Heart right ventricle (tissue), 16 donors: ENCODE measurements at regions of chr12 and their contacts with region 1.

Region 1: DNA sequence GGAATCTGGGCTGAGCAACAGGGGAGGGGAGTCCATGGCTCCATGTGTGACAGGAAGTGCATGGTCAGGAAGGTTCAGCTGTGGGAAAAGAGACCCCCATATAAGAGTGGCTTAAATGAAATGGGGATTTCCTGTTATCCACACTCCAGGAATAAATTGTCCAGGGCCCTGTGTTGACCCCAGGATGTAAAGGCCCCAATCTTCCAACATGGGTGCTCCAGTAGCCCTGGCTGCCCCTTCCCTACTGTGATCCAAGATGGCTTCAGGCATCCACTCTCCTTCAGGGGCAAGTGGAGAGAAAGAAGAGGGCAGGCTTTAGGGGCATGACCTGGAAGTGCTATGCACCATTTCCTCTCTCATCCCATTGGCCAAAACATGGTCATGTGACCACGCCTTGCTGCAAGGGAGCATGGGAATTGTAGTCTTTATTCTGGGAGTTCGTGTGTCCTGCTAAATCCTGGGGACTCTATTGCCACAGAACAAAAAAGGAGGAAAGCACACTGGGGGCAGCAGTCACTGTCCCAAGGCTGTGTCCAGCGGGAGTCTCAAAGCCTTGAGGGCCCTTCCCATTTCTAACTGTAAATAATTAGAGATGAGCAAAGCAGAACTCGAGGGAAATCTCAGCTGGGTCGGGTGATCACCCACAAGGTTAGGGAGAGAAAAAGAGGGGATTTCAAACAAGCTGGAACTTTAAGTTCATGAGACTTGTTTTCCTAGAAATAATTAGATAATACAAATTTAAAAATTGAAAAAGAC is 289.2 kb downstream of the ADGRD1 start:
- DNase-seq: no peak
- ATAC-seq: no peak
- H3K4me3 ChIP-seq: no peak overlapping the region
- H3K27ac ChIP-seq: no peak overlapping the region
- H3K4me1 ChIP-seq: no peaks in the 10 kb centered on the region
- H3K27me3 ChIP-seq: peaks cover 0 to 13% (median 5%) of the 10 kb centered on the region in 7 donors
- CTCF ChIP-seq: no peak

Region 2: DNA sequence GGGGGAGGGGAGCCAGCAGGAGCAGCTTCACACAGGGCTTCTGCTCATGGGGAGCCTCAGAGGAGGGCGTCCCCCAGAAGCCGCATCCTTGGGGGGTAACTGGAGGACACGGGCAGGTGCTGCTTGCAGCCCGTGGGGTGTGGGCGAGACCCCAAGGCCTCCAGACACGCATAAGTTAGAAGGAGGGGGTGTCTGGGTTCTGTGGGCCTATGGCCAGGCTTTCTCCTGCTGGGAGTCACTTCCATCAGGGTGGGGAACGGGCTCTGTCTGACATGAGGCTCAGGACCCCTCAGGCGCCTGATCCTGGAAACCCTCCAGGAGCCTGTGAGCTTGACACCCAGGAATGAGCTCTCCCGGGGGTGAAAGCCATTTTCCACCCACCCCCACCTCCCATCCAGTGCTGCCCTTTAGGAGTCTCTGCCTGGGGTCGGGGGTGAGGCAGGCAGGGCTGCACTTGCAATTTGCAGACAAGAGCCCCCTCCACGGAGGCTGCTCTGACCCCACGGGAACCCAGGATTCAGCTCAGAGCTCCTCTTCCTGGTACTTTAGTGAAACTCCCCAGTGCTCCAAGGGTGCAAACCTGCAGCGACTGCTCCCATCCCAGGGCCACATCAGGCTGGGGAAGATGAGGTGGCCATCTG is 36.5 kb after region 1 on chr12:
- intact Hi-C with region 1: no loop called
- DNase-seq: no peak
- ATAC-seq: no peak
- H3K4me3 ChIP-seq: no peak overlapping the region
- H3K27ac ChIP-seq: no peak overlapping the region
- H3K4me1 ChIP-seq: no peaks in the 10 kb centered on the region
- H3K27me3 ChIP-seq: peaks cover 0 to 22% (median 10%) of the 10 kb centered on the region in 7 donors
- CTCF ChIP-seq: no peak

Region 3: GRCh38 chr12:131345521-131346436 is 102.9 kb after region 1 on chr12:
- intact Hi-C with region 1: loop called in 1 of 10 experiments (anchors 5 kb)
- DNase-seq: no peak
- ATAC-seq: peak in 5 of 8 donors; percentile 22 to 61 (median 31)
- H3K4me3 ChIP-seq: no peak overlapping the region
- H3K27ac ChIP-seq: no peak overlapping the region
- H3K4me1 ChIP-seq: no peaks in the 10 kb centered on the region
- H3K27me3 ChIP-seq: peaks cover 0 to 20% (median 11%) of the 10 kb centered on the region in 7 donors
- CTCF ChIP-seq: no peak